ENCODE measurements at regions of chr12 and their contacts with region 1.

Region 1: GRCh38 chr12:116687888-116688287 is 50.0 kb downstream of the SPRING1 start:
- DNase-seq: no peak
- H3K4me3 ChIP-seq: no peak overlapping the region
- H3K27ac ChIP-seq: no peak overlapping the region
- H3K4me1 ChIP-seq: peaks cover 0 to 4% (median under 1%) of the 10 kb centered on the region in 3 donors
- H3K27me3 ChIP-seq: peaks cover 0 to 19% (median 0%) of the 10 kb centered on the region in 4 donors
- CTCF ChIP-seq: peak in 5 of 6 experiments; percentile 21 to 53 (median 38)
- POLR2A ChIP-seq: no peak

Region 2: GRCh38 chr12:115998119-115998633 is 689.7 kb before region 1 on chr12:
- intact Hi-C with region 1: loop called (anchors 10 kb)
- DNase-seq: no peak
- H3K4me3 ChIP-seq: no peak overlapping the region
- H3K27ac ChIP-seq: peak overlapping the region; percentile 6 to 57 (median 34)
- H3K4me1 ChIP-seq: peaks cover 0 to 27% (median 10%) of the 10 kb centered on the region in 3 donors
- H3K27me3 ChIP-seq: no peaks in the 10 kb centered on the region
- CTCF ChIP-seq: peak; percentile 56 to 85 (median 80)
- POLR2A ChIP-seq: no peak

Region 3: GRCh38 chr12:116797885-116798284 is 110.0 kb after region 1 on chr12:
- intact Hi-C with region 1: no loop called
- DNase-seq: no peak
- H3K4me3 ChIP-seq: no peak overlapping the region
- H3K27ac ChIP-seq: no peak overlapping the region
- H3K4me1 ChIP-seq: no peaks in the 10 kb centered on the region
- H3K27me3 ChIP-seq: no peaks in the 10 kb centered on the region
- CTCF ChIP-seq: no peak
- POLR2A ChIP-seq: no peak

Measured in esophagus squamous epithelium (tissue), 5 donors.